CD4-positive, alpha-beta memory T cell (primary cell): ENCODE measurements at regions of chr4 and their contacts with region 1.

Region 1: DNA sequence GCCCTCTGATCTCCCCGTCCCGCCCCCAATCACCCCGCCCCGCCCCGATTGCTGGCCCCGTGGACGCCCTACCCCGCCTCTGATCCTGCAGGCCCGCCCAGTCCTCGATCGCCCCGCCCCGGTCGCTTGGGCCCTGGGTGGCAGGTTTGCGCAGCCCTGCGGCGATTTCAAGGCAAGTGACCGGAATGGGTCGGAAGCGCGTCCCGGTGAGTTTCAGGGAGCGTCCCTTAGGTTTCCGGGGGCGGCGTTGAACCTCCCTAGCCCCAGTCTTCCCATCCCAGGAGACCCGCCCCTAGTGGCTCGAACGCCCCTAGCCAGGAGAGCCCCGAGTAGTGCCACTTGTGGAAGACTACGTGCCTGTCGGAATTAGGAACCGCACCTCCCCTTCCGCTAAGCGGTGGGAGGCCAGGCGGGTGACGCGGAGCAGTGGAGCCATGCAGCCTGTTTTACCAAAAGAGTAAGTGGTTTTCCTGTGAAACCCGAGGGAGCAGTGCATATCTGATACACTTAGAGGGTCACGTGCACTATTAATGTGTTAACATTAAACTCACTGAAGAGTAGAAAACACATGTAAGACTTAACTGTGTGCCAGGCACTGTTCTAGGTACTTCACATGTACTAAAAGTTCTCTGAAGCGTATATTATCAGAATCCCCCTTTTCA is 354 bp upstream of the TEC start:
- DNase-seq: peak; percentile 74 to 86 (median 77)
- H3K4me3 ChIP-seq: peak overlapping the region; percentile 50 to 59
- H3K4me3 Mint-ChIP-seq: peak overlapping the region; percentile 91 to 98 (median 96)
- H3K27ac ChIP-seq: peak overlapping the region; percentile 48
- H3K27ac Mint-ChIP-seq: peak overlapping the region; percentile 82 to 93 (median 90)
- H3K4me1 ChIP-seq: peaks cover 14% of the 10 kb centered on the region
- H3K4me1 Mint-ChIP-seq: peaks cover 9 to 24% (median 10%) of the 10 kb centered on the region in 4 donors
- H3K27me3 ChIP-seq: no peaks in the 10 kb centered on the region
- H3K27me3 Mint-ChIP-seq: no peaks in the 10 kb centered on the region

Region 2: GRCh38 chr4:48016141-48017103 is 253.6 kb before region 1 on chr4 and contains the starts of genes CNGA1 and NIPAL1:
- CTCF ChIA-PET with region 1: no interaction called
- POLR2A ChIA-PET with region 1: no interaction called
- intact Hi-C with region 1: loop called (anchors 5 kb)
- DNase-seq: peak; percentile 63 to 71 (median 68)
- H3K4me3 ChIP-seq: peak within 1 kb of the TSS; percentile 50 to 57
- H3K4me3 Mint-ChIP-seq: peak within 1 kb of the TSS; percentile 77 to 92 (median 87)
- H3K27ac ChIP-seq: no peak within 1 kb of the TSS
- H3K27ac Mint-ChIP-seq: peak within 1 kb of the TSS in 4 of 7 donors; percentile 6 to 75 (median 40)
- H3K4me1 ChIP-seq: peaks cover 16% of the 10 kb centered on the region
- H3K4me1 Mint-ChIP-seq: peaks cover 4 to 12% (median 9%) of the 10 kb centered on the region in 4 donors
- H3K27me3 ChIP-seq: no peaks in the 10 kb centered on the region
- H3K27me3 Mint-ChIP-seq: peaks cover 8 to 16% of the 10 kb centered on the region in 2 donors
- total RNA-seq, gene CNGA1: not detected
- total RNA-seq, gene NIPAL1: 3.0 to 3.3 TPM

Region 3: DNA sequence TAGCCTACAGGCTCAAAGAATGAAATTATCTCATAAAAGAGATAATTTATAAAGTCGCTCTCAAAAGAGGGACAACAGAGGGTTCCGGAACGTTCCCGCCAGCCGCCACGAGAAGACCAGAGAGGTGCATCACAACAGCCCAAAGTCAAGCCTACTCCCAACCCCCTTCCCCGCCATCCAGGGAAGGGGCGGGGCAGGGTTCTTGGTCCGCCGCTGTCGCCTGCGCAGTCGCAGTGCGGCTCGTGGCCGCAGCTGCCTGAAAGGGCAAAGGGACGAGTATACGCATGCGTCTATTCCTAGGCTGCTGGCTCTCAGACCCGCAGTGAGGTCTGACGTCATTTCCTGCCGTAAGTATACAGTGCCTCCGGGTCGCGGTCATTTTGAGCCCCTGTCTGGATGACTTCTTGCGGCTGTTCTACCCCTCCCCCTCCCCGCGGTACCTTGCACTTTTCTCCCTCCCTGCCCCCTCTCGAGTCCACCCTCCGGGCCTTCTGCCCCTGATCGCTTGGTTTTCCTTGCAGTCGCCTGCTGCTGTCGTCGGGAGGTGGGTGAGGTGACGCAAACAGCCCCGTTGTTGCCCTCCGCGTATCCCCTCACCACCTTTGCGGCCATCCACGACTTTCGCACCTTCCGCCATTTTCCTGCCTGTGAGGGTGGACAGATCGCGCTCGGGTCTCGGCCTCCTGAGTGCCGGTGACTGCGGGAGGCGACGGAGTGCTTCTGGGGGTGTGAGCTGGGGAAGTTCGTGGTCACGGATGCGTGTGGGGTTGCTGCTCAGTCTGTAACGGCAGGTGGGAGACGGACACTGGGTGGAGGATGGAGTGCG is 560.9 kb after region 1 on chr4 and contains the start of gene OCIAD1:
- CTCF ChIA-PET with region 1: no interaction called
- POLR2A ChIA-PET with region 1: no interaction called
- intact Hi-C with region 1: loop called (anchors 2 kb)
- DNase-seq: peak; percentile 91 to 99 (median 96)
- H3K4me3 ChIP-seq: peak within 1 kb of the TSS; percentile 92 to 100
- H3K4me3 Mint-ChIP-seq: peak within 1 kb of the TSS; percentile 100
- H3K27ac ChIP-seq: peak within 1 kb of the TSS; percentile 98
- H3K27ac Mint-ChIP-seq: peak within 1 kb of the TSS; percentile 99 to 100 (median 100)
- H3K4me1 ChIP-seq: peaks cover 25% of the 10 kb centered on the region
- H3K4me1 Mint-ChIP-seq: peaks cover 15 to 35% (median 28%) of the 10 kb centered on the region in 4 donors
- H3K27me3 ChIP-seq: no peaks in the 10 kb centered on the region
- H3K27me3 Mint-ChIP-seq: no peaks in the 10 kb centered on the region
- total RNA-seq, gene OCIAD1: 110 to 124 TPM